ENCODE measurements at regions of chr10 and their contacts with region 1.

Region 1: GRCh38 chr10:102917962-102918816 is at the start of gene CNNM2:
- DNase-seq: peak; percentile 100
- H3K4me3 ChIP-seq: peak within 1 kb of the TSS; percentile 62 to 97 (median 80)
- H3K27ac ChIP-seq: peak within 1 kb of the TSS; percentile 82 to 95 (median 92)
- H3K4me1 ChIP-seq: peaks cover 0 to 46% (median 37%) of the 10 kb centered on the region in 4 donors
- H3K27me3 ChIP-seq: no peaks in the 10 kb centered on the region
- CTCF ChIP-seq: no peak
- EP300 ChIP-seq: no peak
- POLR2A ChIP-seq: peak in 1 of 2 donors; percentile 58
- total RNA-seq, gene CNNM2: 3.6 to 11.1 (median 6.0) TPM

Region 2: DNA sequence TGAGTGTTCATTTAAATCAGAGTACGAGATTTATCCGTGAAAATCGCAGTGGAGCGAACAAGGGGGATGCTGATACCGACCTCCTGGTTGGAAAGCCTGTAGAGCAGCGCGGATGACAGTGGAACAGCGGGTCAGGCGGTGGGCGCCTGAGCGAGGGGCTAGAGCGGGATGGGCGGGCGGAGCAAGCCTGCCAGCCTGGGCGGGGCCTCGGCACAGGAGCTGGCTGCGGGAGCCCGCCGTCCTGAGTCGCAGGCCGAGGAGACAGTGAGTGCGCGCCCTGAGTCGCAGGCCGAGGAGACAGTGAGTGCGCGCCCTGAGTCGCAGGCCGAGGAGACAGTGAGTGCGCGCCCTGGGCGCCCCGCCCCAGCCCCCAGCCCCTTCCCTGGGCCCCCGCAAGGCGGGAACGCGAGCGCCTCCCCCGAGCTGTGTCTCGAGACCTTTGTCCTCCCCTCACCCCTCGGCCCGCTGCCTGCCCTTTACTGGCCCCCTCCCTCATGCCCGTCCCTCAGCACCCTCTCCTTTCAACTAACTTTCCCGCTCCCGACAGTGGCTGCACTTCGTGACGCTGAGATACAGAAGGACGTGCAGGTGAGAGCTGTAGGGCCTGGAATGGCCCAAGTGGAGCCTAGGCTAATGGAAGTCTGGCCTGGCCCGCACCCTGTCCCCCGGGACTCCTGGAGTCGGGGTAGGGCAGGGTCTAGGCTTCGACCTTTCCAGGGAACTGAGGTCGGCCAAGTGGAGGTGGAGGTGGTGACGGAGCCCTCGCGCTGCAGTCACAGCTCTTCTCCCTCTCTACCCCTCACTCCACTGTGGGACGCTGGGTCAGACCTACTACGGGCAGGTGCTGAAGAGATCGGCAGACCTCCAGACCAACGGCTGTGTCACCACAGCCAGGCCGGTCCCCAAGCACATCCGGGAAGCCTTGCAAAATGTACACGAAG is 48.7 kb before region 1 on chr10 and contains the start of gene AS3MT:
- intact Hi-C with region 1: no loop called
- DNase-seq: peak; percentile 68
- H3K4me3 ChIP-seq: peak within 1 kb of the TSS; percentile 49 to 68 (median 60)
- H3K27ac ChIP-seq: peak within 1 kb of the TSS; percentile 52 to 68 (median 56)
- H3K4me1 ChIP-seq: peaks cover 0 to 19% (median 9%) of the 10 kb centered on the region in 4 donors
- H3K27me3 ChIP-seq: no peaks in the 10 kb centered on the region
- CTCF ChIP-seq: no peak
- EP300 ChIP-seq: no peak
- POLR2A ChIP-seq: no peak
- total RNA-seq, gene AS3MT: 5.0 to 11.9 (median 7.5) TPM

Region 3: GRCh38 chr10:103069453-103070331 is 151.5 kb after region 1 on chr10:
- intact Hi-C with region 1: loop called (anchors 2 kb)
- DNase-seq: no peak
- H3K4me3 ChIP-seq: no peak overlapping the region
- H3K27ac ChIP-seq: no peak overlapping the region
- H3K4me1 ChIP-seq: no peaks in the 10 kb centered on the region
- H3K27me3 ChIP-seq: no peaks in the 10 kb centered on the region
- CTCF ChIP-seq: peak; percentile 7 to 54 (median 40)
- EP300 ChIP-seq: no peak
- POLR2A ChIP-seq: no peak

Region 4: DNA sequence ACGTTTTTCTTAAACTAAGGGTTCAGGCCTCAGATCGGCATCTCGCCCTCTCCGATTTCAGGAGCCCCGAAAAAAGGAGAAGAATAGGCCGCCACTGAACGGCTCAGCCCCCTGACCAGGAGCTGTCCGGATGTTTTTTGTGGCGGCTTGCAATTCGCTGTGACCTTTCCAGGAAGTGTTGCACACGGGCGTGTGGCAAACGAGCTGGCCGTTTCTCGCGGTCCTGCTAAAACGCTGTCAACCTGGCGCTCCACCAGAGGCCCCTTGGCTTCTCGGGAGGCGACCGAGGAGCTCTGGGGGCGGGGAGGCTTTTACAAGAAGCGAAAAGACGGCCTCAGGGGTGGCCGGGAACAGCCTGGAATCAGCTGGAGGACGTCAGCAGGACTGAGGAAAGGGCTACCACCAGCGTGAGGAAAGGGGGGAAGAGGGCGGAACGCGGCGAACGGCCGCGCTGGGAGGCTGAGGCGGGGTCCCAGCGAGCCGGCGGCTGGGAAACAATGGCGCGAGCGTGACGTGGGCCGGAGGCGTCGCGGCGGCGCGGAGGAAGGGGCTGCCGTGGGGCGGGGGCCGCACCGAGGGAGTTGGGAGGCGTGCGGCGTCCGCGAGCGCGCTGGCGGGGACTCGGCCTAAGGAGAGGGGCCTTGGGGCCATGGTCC is 274.4 kb after region 1 on chr10:
- intact Hi-C with region 1: loop called (anchors 1 kb)
- DNase-seq: peak; percentile 91
- H3K4me3 ChIP-seq: peak overlapping the region; percentile 85 to 98 (median 96)
- H3K27ac ChIP-seq: peak overlapping the region; percentile 97 to 98 (median 97)
- H3K4me1 ChIP-seq: peaks cover 0 to 46% (median 41%) of the 10 kb centered on the region in 4 donors
- H3K27me3 ChIP-seq: no peaks in the 10 kb centered on the region
- CTCF ChIP-seq: no peak
- EP300 ChIP-seq: no peak
- POLR2A ChIP-seq: peak; percentile 12 to 43